PC-3 (cell line): ENCODE measurements at regions of chr14 and their contacts with region 1.

Region 1: DNA sequence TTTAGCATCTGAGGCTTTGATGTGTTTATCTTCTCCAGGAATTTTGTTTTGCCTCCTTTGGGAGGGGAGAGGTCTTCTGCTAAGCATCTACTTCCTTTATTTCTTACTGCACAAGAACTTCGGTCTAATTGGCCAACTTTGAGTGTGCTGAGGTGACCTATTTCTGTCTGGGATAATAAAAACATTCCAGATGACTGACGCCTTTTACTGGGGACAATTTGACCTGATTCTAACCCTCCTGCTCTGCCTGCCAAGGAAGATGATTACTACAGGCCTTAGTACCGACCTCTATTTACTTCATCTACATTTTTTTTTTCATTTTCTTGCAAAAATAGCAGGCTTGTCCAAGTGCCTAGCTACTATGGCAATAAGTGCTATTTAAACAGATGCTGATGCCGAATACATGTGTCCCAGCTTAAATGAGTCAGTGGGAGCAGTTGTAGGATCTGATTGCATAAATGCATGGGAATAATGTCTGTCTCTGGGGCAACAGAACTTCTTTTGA is 254.2 kb downstream of the RGS6 start:
- DNase-seq: no peak
- ATAC-seq: no peak
- H3K4me3 ChIP-seq: no peak overlapping the region
- H3K27ac ChIP-seq: no peak overlapping the region
- H3K4me1 ChIP-seq: no peaks in the 10 kb centered on the region
- H3K27me3 ChIP-seq: peaks cover 56% of the 10 kb centered on the region
- CTCF ChIP-seq: no peak

Region 2: DNA sequence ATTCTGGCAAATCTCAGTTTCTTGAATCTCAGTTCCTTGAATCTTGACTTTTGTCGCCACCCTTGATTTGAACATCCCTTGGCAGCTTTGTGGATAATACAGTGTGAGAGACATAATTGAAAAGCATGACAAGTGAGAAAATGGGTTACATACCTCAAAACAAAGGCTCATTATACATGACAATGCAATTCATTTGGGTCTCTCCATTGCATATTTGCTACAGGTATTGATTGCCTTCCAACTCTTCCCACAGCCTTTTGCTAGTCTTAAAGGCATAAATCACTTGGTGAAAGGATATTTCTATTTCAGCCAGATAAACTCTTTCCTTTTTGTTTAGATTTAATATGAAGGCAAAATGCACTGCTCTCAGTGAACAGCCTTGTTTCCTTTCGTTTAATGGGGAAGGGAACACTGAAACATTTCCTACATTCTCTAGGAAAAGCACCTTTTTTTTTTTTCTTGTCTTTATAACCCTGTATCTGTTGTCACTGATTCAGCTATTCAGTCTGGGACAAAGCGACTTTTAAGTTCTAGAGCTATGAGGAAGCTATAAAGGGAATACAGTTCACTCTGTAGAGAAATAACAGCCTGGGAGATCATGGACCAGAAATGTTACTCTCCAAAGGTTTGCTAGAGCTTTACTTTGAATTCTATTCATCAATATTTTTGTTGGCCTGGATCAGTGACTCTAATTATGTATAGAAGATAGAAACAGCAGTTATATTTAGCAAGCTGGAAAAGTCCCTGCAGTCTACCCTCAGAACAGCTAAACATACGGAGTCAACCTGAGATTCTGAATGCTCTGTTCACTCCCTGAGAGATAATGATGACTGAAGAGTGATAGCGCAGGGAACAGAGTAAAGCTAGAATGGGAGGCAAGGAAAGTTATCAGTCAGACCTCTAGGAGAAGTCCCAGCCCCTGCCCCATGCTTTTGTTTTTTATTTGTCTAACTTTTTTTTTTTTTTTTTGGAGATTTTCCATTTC is 57.1 kb after region 1 on chr14:
- CTCF ChIA-PET with region 1: no interaction called
- POLR2A ChIA-PET with region 1: interaction called, 12 read pairs
- intact Hi-C with region 1: no loop called
- DNase-seq: no peak
- ATAC-seq: no peak
- H3K4me3 ChIP-seq: no peak overlapping the region
- H3K27ac ChIP-seq: no peak overlapping the region
- H3K4me1 ChIP-seq: no peaks in the 10 kb centered on the region
- H3K27me3 ChIP-seq: peaks cover 78% of the 10 kb centered on the region
- CTCF ChIP-seq: no peak